ENCODE measurements at regions of chr1 and their contacts with region 1.

Region 1: GRCh38 chr1:47432071-47433036 is 5.5 kb upstream of the FOXD2 start:
- DNase-seq: no peak
- H3K4me3 ChIP-seq: peak overlapping the region in 1 of 2 donors; percentile 4
- H3K27ac ChIP-seq: no peak overlapping the region
- H3K4me1 ChIP-seq: peaks cover 48% of the 10 kb centered on the region
- H3K27me3 ChIP-seq: peaks cover 8% of the 10 kb centered on the region
- CTCF ChIP-seq: peak; percentile 14 to 57 (median 39)
- POLR2A ChIP-seq: no peak

Region 2: DNA sequence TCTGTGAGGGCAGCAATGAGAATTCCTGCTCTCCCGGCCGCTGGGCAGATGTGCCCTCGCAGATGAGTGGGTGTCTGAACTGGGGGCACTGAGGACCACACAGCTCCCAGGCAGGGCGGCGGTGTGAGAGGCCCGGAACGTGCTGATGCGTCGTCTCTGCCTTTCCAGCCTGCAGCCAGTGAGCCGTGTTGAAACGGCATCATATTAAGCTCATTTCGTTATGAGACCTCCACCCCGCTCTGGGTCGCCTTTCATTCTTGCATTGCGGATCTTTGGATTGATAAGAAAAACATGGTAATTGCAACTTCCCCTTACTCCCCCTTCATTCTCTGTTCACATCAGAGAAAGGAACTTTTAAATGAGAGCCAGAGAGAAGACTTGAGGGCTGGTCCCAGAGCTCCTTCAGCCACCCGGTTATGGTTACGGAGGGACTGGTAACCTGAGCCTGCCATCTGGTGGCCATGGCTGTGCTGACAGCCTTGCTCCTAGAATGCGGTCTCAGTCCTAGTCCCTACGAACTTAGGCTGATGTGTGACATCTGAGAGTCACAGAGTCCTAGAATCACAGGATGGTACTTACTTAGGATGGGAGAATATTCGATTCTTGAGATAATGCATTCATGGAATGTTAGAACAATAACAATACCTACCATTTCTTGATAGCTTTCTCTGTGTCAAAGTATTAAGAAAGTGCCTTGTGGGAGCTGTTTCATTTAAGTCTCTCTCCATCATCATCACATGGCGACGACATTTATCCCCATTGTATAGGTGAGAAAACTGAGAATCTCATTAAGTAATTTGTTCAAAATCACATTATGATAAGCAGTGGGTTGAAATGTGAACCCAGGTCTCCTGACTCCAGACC is 293.9 kb after region 1 on chr1:
- intact Hi-C with region 1: loop called (anchors 5 kb)
- DNase-seq: no peak
- H3K4me3 ChIP-seq: peak overlapping the region in 1 of 2 donors; percentile 29
- H3K27ac ChIP-seq: no peak overlapping the region
- H3K4me1 ChIP-seq: peaks cover 18% of the 10 kb centered on the region
- H3K27me3 ChIP-seq: peaks cover 6% of the 10 kb centered on the region
- CTCF ChIP-seq: peak; percentile 77 to 80 (median 79)
- POLR2A ChIP-seq: no peak